ENCODE measurements at regions of chr5 and their contacts with region 1.

Region 1: DNA sequence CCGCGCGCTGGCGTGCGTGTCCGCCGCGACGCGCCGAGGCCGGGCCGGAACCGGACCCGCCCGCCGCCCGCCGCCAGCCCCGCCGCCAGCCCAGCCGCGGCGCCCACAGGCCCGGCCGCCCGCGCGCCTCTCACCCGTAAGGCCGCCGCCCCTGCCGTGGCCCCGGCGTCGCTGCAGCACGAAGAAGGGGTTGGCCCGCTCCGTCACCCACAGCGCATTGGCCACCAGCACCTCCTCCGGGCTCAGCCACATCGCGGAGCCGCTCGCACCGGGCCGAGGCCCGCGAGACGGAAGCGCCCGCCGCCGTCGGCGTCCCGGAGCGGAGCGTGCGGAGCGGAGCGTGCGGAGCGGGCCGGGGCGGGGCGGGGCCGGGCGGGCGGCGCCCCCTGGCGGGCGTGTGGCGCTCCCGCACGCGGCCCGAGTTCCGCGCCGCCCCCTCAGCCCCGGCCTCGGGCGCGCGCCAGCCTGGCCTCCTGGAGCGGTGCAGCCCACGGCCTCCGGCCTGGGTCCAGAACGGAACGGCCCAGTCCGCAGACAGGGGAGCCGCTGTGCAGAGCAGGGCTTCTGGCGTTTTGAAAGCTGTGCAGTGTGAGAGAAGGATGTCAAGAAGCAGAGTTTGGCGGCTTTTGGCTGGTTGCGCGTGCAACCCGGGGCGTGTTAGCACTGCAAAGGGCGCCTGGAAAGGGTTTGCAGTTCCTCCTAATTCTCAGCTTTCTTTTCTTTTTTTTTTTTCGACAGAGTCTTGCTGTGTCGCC is at the start of gene TBC1D9B:
- DNase-seq: peak; percentile 36
- H3K4me3 ChIP-seq: peak within 1 kb of the TSS; percentile 47 to 50
- H3K27ac ChIP-seq: peak within 1 kb of the TSS; percentile 66 to 68
- H3K4me1 ChIP-seq: peaks cover 5% of the 10 kb centered on the region
- H3K27me3 ChIP-seq: no peaks in the 10 kb centered on the region
- CTCF ChIP-seq: peak in 3 of 4 experiments; percentile 42 to 62 (median 56)
- POLR2A ChIP-seq: no peak
- total RNA-seq, gene TBC1D9B: 64.1 to 163 TPM

Region 2: DNA sequence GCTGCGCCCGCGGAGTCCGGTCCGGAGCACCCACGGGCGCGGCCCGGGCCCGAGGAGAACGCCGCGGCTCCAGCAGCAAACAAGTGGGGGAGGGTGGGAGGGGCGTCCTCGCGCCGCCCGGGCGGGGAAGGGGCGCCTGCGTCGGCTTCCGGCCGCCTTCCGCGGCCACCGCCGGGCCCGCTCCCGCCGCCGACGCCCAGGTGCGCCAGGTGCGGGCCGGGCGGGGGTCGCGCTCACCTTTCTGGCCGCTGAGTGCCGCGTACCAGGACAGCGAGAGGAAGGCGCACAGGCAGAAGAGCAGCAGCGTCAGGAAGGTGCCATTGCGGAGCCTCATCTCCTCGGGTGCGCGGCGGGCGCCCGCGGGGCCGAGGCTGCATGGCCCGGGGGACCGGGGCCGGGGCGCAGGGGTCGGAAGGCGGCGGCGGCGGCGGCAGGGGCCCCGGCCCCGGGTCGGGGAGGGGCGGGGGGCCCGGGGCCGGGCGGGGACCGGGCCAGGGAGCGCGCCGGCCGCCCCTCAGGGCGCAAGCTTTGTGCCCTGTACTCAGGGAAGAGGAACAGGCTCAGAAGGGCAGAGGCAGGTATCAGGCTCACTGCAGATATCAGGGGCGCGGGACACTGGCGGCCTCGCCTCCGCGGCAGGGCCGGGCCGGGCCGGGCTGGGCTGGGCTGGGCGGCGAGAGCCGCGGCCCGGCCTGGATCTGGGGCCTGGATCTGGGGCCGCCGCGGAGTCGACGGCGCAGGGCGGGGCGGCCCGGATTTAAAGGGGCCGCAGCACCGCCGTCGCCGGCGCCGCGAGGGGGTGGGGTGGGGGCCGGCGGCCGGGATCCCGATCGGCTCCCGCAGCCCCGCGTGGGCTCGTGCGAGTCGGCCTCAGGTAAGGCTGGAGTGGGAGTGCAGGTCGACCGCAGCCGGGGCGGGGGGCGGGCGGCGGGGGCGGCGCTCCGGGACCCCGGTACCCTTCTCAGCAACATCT is 101.2 kb before region 1 on chr5 and contains the start of gene MGAT4B:
- intact Hi-C with region 1: loop called (anchors 5 kb)
- DNase-seq: peak; percentile 71
- H3K4me3 ChIP-seq: peak within 1 kb of the TSS; percentile 79 to 85
- H3K27ac ChIP-seq: peak within 1 kb of the TSS; percentile 94 to 95
- H3K4me1 ChIP-seq: peaks cover 12% of the 10 kb centered on the region
- H3K27me3 ChIP-seq: no peaks in the 10 kb centered on the region
- CTCF ChIP-seq: peak in 2 of 4 experiments; percentile 4 to 14
- POLR2A ChIP-seq: peak; percentile 72
- total RNA-seq, gene MGAT4B: 82.7 to 142 TPM

Region 3: DNA sequence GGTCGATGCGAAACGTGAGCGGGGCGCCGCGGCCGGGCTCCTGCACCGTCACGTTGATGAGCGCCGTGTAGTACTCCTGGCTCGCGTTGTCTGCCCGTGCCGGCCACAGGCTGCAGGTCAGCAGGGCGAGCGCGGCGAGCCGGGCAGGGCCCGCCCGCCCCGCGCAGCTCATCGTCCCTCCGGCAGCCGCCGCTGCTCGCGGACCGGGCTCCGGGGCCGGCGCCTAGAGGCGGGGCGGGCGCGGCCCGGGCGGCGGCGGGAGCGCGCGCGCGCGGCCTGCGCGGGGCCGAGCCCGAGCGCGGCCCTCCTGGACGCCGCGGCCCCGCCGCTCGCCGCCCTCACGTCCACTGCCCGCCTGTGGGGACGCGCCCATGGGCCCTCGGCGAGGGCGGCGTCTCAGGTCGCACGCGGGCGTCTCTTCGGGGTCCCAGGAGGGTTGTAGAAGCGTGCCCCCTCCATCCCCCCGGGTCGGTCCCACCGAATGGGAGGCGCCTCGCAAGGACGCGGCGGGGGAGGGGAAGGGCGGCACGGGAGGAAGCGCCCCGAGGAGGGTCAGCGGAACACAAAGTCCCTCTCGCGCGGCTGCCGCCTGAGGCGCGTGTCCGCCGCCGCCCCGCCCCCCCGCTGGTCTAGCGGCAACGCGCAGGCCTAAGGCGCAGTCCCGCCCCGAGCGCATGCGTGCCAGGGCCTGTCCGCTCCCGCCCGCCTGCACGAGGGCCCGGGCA is 163.9 kb after region 1 on chr5 and contains the start of gene RNF130:
- intact Hi-C with region 1: loop called (anchors 5 kb)
- DNase-seq: peak; percentile 90
- H3K4me3 ChIP-seq: peak within 1 kb of the TSS; percentile 86 to 92
- H3K27ac ChIP-seq: peak within 1 kb of the TSS; percentile 95 to 96
- H3K4me1 ChIP-seq: no peaks in the 10 kb centered on the region
- H3K27me3 ChIP-seq: no peaks in the 10 kb centered on the region
- CTCF ChIP-seq: peak in 1 of 4 experiments; percentile 29
- POLR2A ChIP-seq: peak; percentile 50
- total RNA-seq, gene RNF130: 83.8 to 116 TPM

Region 4: GRCh38 chr5:180259260-180259681 is 351.5 kb after region 1 on chr5:
- intact Hi-C with region 1: no loop called
- DNase-seq: no peak
- H3K4me3 ChIP-seq: no peak overlapping the region
- H3K27ac ChIP-seq: no peak overlapping the region
- H3K4me1 ChIP-seq: no peaks in the 10 kb centered on the region
- H3K27me3 ChIP-seq: no peaks in the 10 kb centered on the region
- CTCF ChIP-seq: no peak
- POLR2A ChIP-seq: no peak

Measured in prostate gland (tissue), 2 donors.